ENCODE measurements at regions of chr5 and their contacts with region 1.

Region 1: DNA sequence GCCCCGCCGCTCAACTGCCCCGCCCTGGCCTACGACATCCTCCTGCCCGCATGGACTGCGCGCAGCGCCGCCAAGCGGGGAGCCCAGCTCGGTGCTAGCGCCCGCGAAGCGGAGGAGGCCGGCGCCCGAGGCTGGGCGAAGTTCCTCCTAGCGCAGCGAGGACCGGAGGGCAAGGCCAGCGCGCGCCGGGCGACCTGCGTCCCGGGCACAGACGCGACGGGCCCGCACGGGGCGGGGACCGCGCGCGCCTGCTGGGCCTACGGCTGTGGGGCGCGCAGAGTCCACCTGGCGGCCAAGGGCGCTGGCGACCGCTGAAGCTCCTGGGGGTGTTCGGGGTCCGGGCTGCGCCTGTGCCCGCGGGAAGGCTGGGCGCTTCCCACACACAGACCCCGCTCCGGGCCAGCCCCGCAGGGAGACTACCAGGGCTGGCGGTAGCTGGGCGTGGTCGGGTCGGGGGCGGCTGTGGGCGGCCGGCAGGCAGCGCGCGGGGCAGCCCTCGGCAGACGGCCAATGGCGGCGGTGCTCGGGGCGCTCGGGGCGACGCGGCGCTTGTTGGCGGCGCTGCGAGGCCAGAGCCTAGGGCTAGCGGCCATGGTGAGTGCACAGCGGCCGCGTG is at the start of gene PCBD2:
- DNase-seq: peak; percentile 83 to 96 (median 90)
- ATAC-seq: peak; percentile 85
- H3K4me3 ChIP-seq: peak within 1 kb of the TSS; percentile 87
- H3K4me3 Mint-ChIP-seq: peak within 1 kb of the TSS; percentile 99
- H3K27ac ChIP-seq: peak within 1 kb of the TSS; percentile 83 to 85
- H3K27ac Mint-ChIP-seq: peak within 1 kb of the TSS; percentile 95
- H3K4me1 ChIP-seq: peaks cover 22% of the 10 kb centered on the region
- H3K4me1 Mint-ChIP-seq: peaks cover 15% of the 10 kb centered on the region
- H3K27me3 ChIP-seq: no peaks in the 10 kb centered on the region
- H3K27me3 Mint-ChIP-seq: no peaks in the 10 kb centered on the region
- CTCF ChIP-seq: peak; percentile 81
- total RNA-seq, gene PCBD2: 5.2 to 5.8 TPM

Region 2: DNA sequence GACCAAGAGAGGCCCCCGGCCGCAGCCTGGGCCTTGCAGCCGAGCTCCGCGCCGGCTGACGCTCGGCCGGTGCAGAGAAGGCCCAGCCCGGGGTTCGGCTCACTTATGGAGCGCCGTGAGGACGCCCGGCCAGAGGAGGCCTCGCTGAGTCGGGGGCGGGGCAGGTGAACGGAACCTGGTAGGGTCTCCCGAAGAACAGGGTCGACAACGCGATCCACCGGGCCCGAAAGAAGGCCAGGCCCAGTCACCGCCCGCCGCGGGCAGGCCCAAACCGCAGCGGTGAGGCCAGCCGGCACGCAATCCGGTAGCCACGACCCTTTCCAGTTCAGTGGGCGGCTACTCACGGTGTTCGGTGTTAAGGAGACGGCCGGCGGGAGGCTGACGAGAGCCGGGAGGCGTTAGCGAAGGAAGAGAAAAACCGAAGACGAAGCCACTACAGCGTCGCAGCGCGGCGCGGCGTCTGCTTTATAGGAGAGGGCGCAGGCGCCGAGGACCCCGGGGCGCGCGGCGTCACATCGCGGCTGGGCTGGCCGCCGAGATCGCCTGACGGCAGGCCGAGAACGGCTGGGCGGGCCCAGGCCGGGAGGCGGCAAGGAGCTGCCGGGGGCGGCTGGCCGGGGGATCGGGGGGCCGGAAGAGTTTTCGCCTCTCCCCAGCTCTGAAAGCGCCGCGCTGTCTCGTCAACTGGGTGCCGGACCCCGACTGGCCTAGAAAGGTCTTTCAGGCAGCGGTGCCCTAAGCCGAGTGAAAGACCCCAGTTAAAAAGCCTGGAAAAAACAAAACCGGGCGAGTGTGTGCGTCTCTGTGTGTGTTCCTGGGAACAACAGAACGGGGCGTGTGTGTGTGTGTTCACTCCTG is 728.0 kb before region 1 on chr5 and contains the start of gene SKP1:
- CTCF ChIA-PET with region 1: no interaction called
- POLR2A ChIA-PET with region 1: interaction called, 14 read pairs
- intact Hi-C with region 1: no loop called
- DNase-seq: peak; percentile 76 to 94 (median 86)
- ATAC-seq: peak; percentile 83
- H3K4me3 ChIP-seq: peak within 1 kb of the TSS; percentile 98
- H3K4me3 Mint-ChIP-seq: peak within 1 kb of the TSS; percentile 97
- H3K27ac ChIP-seq: peak within 1 kb of the TSS; percentile 98 to 99
- H3K27ac Mint-ChIP-seq: peak within 1 kb of the TSS; percentile 98
- H3K4me1 ChIP-seq: peaks cover 19% of the 10 kb centered on the region
- H3K4me1 Mint-ChIP-seq: peaks cover 36% of the 10 kb centered on the region
- H3K27me3 ChIP-seq: no peaks in the 10 kb centered on the region
- H3K27me3 Mint-ChIP-seq: no peaks in the 10 kb centered on the region
- CTCF ChIP-seq: no peak
- total RNA-seq, gene SKP1: 303 to 314 TPM

Region 3: DNA sequence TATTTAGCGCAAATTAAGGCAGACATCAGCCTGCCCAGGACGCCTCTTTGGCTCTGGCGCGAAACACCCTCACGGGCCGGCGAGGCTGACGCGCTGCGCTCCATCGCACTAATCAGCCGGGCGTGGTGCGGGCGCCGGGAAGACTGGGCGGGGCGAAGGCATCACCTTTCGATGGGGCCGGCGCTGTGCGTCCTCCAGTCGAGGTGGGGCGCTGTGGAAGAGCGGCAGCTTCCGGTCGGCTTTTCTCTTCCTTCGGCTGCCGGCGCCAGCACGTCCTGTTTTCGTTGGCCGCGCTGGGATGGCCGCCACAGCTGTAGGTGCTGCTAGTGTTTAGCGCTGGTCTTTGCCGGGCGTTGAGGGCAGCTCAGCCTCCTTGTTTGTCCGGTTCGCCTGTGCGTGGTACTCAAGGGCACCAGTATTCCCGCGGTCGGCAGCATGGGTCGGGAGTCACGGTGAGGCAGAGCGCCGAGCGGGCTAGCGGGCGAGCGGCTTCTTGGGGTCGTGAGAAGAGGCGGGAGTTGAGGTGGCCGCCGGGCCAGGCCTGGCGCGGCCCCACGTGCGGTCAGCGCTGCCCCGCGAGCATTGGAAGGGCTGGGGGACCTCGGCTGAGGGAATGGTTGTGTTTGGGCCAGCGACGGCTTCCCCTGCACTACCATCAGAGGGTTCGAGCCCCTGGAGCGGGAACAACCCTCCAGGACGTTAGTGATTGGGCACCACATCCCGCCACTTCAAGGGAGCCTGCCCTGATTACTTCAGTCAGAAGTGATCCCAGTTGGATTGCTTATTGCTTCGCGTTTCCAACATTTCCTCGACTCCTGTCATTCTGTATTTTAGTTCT is 146.0 kb before region 1 on chr5 and contains the start of gene DDX46:
- CTCF ChIA-PET with region 1: interaction called, 12 read pairs
- POLR2A ChIA-PET with region 1: interaction called, 18 read pairs
- intact Hi-C with region 1: no loop called
- DNase-seq: peak; percentile 89 to 97 (median 93)
- ATAC-seq: peak; percentile 99
- H3K4me3 ChIP-seq: peak within 1 kb of the TSS; percentile 91
- H3K4me3 Mint-ChIP-seq: peak within 1 kb of the TSS; percentile 100
- H3K27ac ChIP-seq: peak within 1 kb of the TSS; percentile 74 to 76
- H3K27ac Mint-ChIP-seq: peak within 1 kb of the TSS; percentile 95
- H3K4me1 ChIP-seq: peaks cover 22% of the 10 kb centered on the region
- H3K4me1 Mint-ChIP-seq: peaks cover 44% of the 10 kb centered on the region
- H3K27me3 ChIP-seq: no peaks in the 10 kb centered on the region
- H3K27me3 Mint-ChIP-seq: no peaks in the 10 kb centered on the region
- CTCF ChIP-seq: peak; percentile 89
- total RNA-seq, gene DDX46: 35.5 to 35.8 TPM

Region 4: GRCh38 chr5:134845852-134846640 is 58.7 kb before region 1 on chr5 and contains the start of gene C5orf24:
- CTCF ChIA-PET with region 1: interaction called, 16 read pairs
- POLR2A ChIA-PET with region 1: interaction called, 58 read pairs
- intact Hi-C with region 1: loop called (anchors 1 to 2 kb)
- DNase-seq: peak; percentile 83 to 98 (median 90)
- ATAC-seq: peak; percentile 90
- H3K4me3 ChIP-seq: peak within 1 kb of the TSS; percentile 76
- H3K4me3 Mint-ChIP-seq: peak within 1 kb of the TSS; percentile 86
- H3K27ac ChIP-seq: peak within 1 kb of the TSS; percentile 87
- H3K27ac Mint-ChIP-seq: peak within 1 kb of the TSS; percentile 95
- H3K4me1 ChIP-seq: peaks cover 35% of the 10 kb centered on the region
- H3K4me1 Mint-ChIP-seq: peaks cover 26% of the 10 kb centered on the region
- H3K27me3 ChIP-seq: no peaks in the 10 kb centered on the region
- H3K27me3 Mint-ChIP-seq: no peaks in the 10 kb centered on the region
- CTCF ChIP-seq: no peak
- total RNA-seq, gene C5orf24: 34.6 to 36.5 TPM

Region 5: GRCh38 chr5:136703706-136704105 is 1799.0 kb after region 1 on chr5:
- CTCF ChIA-PET with region 1: no interaction called
- POLR2A ChIA-PET with region 1: no interaction called
- intact Hi-C with region 1: no loop called
- DNase-seq: no peak
- ATAC-seq: no peak
- H3K4me3 ChIP-seq: no peak overlapping the region
- H3K4me3 Mint-ChIP-seq: no peak overlapping the region
- H3K27ac ChIP-seq: no peak overlapping the region
- H3K27ac Mint-ChIP-seq: no peak overlapping the region
- H3K4me1 ChIP-seq: no peaks in the 10 kb centered on the region
- H3K4me1 Mint-ChIP-seq: no peaks in the 10 kb centered on the region
- H3K27me3 ChIP-seq: no peaks in the 10 kb centered on the region
- H3K27me3 Mint-ChIP-seq: no peaks in the 10 kb centered on the region
- CTCF ChIP-seq: no peak

Measured in CD4-positive, alpha-beta T cell (primary cell).